ENCODE measurements at regions of chr6 and their contacts with region 1.

Region 1: GRCh38 chr6:43369174-43370022 is at the start of gene ZNF318:
- DNase-seq: peak; percentile 88 to 99 (median 92)
- ATAC-seq: peak; percentile 95
- H3K4me3 ChIP-seq: peak within 1 kb of the TSS; percentile 77
- H3K4me3 Mint-ChIP-seq: peak within 1 kb of the TSS; percentile 96
- H3K27ac ChIP-seq: peak within 1 kb of the TSS; percentile 76 to 85
- H3K27ac Mint-ChIP-seq: peak within 1 kb of the TSS; percentile 95
- H3K4me1 ChIP-seq: peaks cover 38% of the 10 kb centered on the region
- H3K4me1 Mint-ChIP-seq: peaks cover 49% of the 10 kb centered on the region
- H3K27me3 ChIP-seq: no peaks in the 10 kb centered on the region
- H3K27me3 Mint-ChIP-seq: no peaks in the 10 kb centered on the region
- CTCF ChIP-seq: no peak
- total RNA-seq, gene ZNF318: 20.4 TPM

Region 2: GRCh38 chr6:43308101-43308989 is 61.1 kb before region 1 on chr6 and contains the start of gene CRIP3:
- CTCF ChIA-PET with region 1: no interaction called
- POLR2A ChIA-PET with region 1: interaction called, 10 read pairs
- intact Hi-C with region 1: no loop called
- DNase-seq: peak; percentile 18 to 73 (median 48)
- ATAC-seq: peak; percentile 85
- H3K4me3 ChIP-seq: peak within 1 kb of the TSS; percentile 63
- H3K4me3 Mint-ChIP-seq: peak within 1 kb of the TSS; percentile 82
- H3K27ac ChIP-seq: peak within 1 kb of the TSS in 1 of 2 donors; percentile 22
- H3K27ac Mint-ChIP-seq: no peak within 1 kb of the TSS
- H3K4me1 ChIP-seq: peaks cover 19% of the 10 kb centered on the region
- H3K4me1 Mint-ChIP-seq: peaks cover 7% of the 10 kb centered on the region
- H3K27me3 ChIP-seq: no peaks in the 10 kb centered on the region
- H3K27me3 Mint-ChIP-seq: no peaks in the 10 kb centered on the region
- CTCF ChIP-seq: peak; percentile 54
- total RNA-seq, gene CRIP3: 1.8 to 2.0 TPM

Region 3: DNA sequence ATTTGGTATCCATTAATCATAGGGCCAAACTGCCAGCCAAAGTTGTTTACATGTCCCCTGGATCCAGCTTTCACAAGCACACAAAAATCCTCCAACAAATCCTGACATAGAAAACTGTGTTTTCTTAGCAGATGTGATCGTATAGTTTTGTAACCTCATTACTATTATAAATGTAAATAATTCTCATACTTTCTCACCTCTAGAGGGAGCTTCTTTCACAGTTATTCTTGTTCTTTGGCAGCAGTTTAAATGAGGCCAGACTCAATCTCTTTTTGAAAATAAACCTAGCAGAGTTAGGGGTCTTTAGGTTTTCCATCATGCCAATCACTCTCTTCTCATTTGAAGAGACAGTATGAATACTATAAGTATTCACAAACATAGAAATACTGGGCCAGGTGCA is 17.1 kb after region 1 on chr6:
- CTCF ChIA-PET with region 1: interaction called, 8 read pairs
- POLR2A ChIA-PET with region 1: interaction called, 136 read pairs
- intact Hi-C with region 1: loop called (anchors 1 to 2 kb)
- DNase-seq: peak in 3 of 14 experiments; percentile 44 to 57 (median 50)
- ATAC-seq: no peak
- H3K4me3 ChIP-seq: no peak overlapping the region
- H3K4me3 Mint-ChIP-seq: peak overlapping the region; percentile 22
- H3K27ac ChIP-seq: no peak overlapping the region
- H3K27ac Mint-ChIP-seq: peak overlapping the region; percentile 93
- H3K4me1 ChIP-seq: peaks cover 55% of the 10 kb centered on the region
- H3K4me1 Mint-ChIP-seq: peaks cover 75% of the 10 kb centered on the region
- H3K27me3 ChIP-seq: no peaks in the 10 kb centered on the region
- H3K27me3 Mint-ChIP-seq: no peaks in the 10 kb centered on the region
- CTCF ChIP-seq: peak; percentile 54

Region 4: GRCh38 chr6:43391440-43392031 is 22.1 kb after region 1 on chr6:
- CTCF ChIA-PET with region 1: interaction called, 5 read pairs
- POLR2A ChIA-PET with region 1: interaction called, 55 read pairs
- intact Hi-C with region 1: no loop called
- DNase-seq: peak in 12 of 14 experiments; percentile 14 to 83 (median 40)
- ATAC-seq: peak; percentile 78
- H3K4me3 ChIP-seq: peak overlapping the region; percentile 22
- H3K4me3 Mint-ChIP-seq: peak overlapping the region; percentile 51
- H3K27ac ChIP-seq: no peak overlapping the region
- H3K27ac Mint-ChIP-seq: peak overlapping the region; percentile 46
- H3K4me1 ChIP-seq: peaks cover 25% of the 10 kb centered on the region
- H3K4me1 Mint-ChIP-seq: peaks cover 50% of the 10 kb centered on the region
- H3K27me3 ChIP-seq: no peaks in the 10 kb centered on the region
- H3K27me3 Mint-ChIP-seq: no peaks in the 10 kb centered on the region
- CTCF ChIP-seq: no peak

Region 5: DNA sequence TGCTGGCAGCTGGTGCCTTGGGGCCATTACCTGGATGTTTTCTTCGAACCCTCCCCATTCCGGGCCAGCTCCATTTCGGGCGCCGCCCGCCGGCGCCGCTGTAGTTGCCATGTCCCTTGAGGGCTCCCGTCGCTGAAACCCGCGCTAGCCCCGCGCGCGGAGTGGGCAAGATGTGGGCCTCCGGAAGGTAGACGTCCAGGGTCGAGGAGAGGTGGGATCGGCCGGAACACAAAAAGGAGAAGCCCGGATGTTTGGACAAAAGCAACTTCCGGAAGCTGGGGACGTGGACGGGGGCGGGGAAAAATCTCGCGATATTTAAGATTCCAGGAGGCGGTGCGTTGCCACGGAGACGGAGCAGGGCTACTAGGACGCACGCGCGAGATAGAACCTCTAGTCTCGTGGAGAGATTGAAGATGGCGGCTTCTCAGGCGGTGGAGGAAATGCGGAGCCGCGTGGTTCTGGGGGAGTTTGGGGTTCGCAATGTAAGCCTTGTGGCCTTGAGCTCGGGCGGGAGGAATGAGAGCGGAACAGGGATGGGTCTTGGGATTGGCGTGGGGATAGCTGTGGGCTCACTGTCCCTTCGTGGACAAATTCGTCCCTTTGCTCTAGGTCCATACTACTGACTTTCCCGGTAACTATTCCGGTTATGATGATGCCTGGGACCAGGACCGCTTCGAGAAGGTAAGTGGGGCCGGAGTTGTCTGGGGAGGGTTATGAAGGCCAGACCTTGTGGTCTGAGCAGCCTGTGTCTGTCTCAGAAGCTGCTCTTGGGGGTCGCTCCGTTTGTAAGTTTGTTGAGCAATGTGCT is 147.5 kb after region 1 on chr6 and contains the starts of genes POLR1C and YIPF3:
- CTCF ChIA-PET with region 1: no interaction called
- POLR2A ChIA-PET with region 1: interaction called, 10 read pairs
- intact Hi-C with region 1: no loop called
- DNase-seq: peak; percentile 91 to 98 (median 96)
- ATAC-seq: peak; percentile 96
- H3K4me3 ChIP-seq: peak within 1 kb of the TSS; percentile 100
- H3K4me3 Mint-ChIP-seq: no peak within 1 kb of the TSS
- H3K27ac ChIP-seq: peak within 1 kb of the TSS; percentile 81 to 90
- H3K27ac Mint-ChIP-seq: no peak within 1 kb of the TSS
- H3K4me1 ChIP-seq: peaks cover 43% of the 10 kb centered on the region
- H3K4me1 Mint-ChIP-seq: peaks cover 33% of the 10 kb centered on the region
- H3K27me3 ChIP-seq: no peaks in the 10 kb centered on the region
- H3K27me3 Mint-ChIP-seq: no peaks in the 10 kb centered on the region
- CTCF ChIP-seq: no peak
- total RNA-seq, gene POLR1C: 46.6 to 47.8 TPM
- total RNA-seq, gene YIPF3: 36.5 to 37.9 TPM

Region 6: GRCh38 chr6:44569931-44570385 is 1200.6 kb after region 1 on chr6:
- CTCF ChIA-PET with region 1: no interaction called
- POLR2A ChIA-PET with region 1: no interaction called
- intact Hi-C with region 1: no loop called
- DNase-seq: peak in 2 of 14 experiments; percentile 23 to 32
- ATAC-seq: no peak
- H3K4me3 ChIP-seq: no peak overlapping the region
- H3K4me3 Mint-ChIP-seq: no peak overlapping the region
- H3K27ac ChIP-seq: no peak overlapping the region
- H3K27ac Mint-ChIP-seq: no peak overlapping the region
- H3K4me1 ChIP-seq: no peaks in the 10 kb centered on the region
- H3K4me1 Mint-ChIP-seq: no peaks in the 10 kb centered on the region
- H3K27me3 ChIP-seq: peaks cover 0 to 7% of the 10 kb centered on the region in 2 experiments
- H3K27me3 Mint-ChIP-seq: peaks cover 8% of the 10 kb centered on the region
- CTCF ChIP-seq: no peak

Measured in CD4-positive, alpha-beta T cell (primary cell).